Ascending aorta (tissue), 2 donors: ENCODE measurements at regions of chr19 and their contacts with region 1.

Region 1: DNA sequence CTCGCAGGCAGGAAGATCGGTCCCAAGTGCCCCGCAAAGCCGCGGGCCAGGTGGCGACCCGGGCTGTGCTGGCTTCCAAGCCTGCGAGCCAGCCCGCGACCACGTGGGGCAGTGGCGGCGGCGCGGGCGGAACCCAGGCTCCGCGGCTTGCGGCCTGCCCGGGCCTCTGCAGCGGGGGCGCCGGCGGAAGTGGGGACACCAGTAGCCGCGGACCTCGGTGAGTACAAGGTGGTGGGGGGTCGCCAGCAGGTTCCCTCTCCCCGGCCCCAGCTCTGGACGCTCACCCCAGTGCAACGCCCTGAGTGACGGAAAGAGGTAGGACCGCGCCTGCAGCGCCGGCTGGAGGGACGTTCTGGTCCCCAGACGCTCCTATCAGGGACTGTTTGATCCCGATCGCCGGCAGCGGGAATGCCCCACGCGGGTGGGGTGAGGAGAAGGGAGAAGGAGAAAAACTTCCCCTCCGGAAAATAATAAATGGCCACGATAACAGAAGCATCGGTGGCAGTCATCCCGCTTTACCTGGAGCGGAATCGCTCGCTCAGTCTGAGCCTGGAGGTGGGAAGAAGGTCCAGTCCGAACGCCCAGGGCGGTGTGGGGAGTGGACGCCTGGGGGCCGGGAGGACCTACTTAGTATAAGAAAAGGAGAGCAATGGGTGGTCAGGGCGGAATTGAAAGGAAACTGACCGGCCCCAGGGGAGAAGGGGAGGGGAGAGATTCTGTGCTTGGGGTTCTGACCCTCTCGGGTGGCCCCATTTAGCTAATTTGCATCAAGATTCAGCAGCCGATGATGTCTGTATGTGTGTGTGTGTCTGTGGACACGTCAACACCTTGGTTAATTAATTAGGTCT is at the start of gene GEMIN7:
- DNase-seq: peak in 1 of 2 donors; percentile 84
- H3K4me3 ChIP-seq: peak within 1 kb of the TSS; percentile 86 to 91
- H3K27ac ChIP-seq: peak within 1 kb of the TSS in 1 of 2 donors; percentile 15
- H3K4me1 ChIP-seq: peaks cover 7 to 10% of the 10 kb centered on the region in 2 donors
- H3K27me3 ChIP-seq: no peaks in the 10 kb centered on the region
- CTCF ChIP-seq: peak in 1 of 3 experiments; percentile 16
- total RNA-seq, gene GEMIN7: 48.2 TPM

Region 2: GRCh38 chr19:44890366-44891015 is 188.8 kb before region 1 on chr19:
- intact Hi-C with region 1: no loop called
- DNase-seq: peak; percentile 100
- H3K4me3 ChIP-seq: peak overlapping the region; percentile 65 to 72
- H3K27ac ChIP-seq: peak overlapping the region; percentile 92 to 97
- H3K4me1 ChIP-seq: peaks cover 12 to 19% of the 10 kb centered on the region in 2 donors
- H3K27me3 ChIP-seq: no peaks in the 10 kb centered on the region
- CTCF ChIP-seq: no peak

Region 3: GRCh38 chr19:45038931-45039893 is 40.1 kb before region 1 on chr19 and contains the start of gene CLASRP:
- intact Hi-C with region 1: loop called (anchors 2 kb)
- DNase-seq: peak; percentile 65 to 94
- H3K4me3 ChIP-seq: peak within 1 kb of the TSS; percentile 83 to 86
- H3K27ac ChIP-seq: peak within 1 kb of the TSS; percentile 91 to 96
- H3K4me1 ChIP-seq: peaks cover 5 to 22% of the 10 kb centered on the region in 2 donors
- H3K27me3 ChIP-seq: no peaks in the 10 kb centered on the region
- CTCF ChIP-seq: no peak
- total RNA-seq, gene CLASRP: 103 TPM

Region 4: DNA sequence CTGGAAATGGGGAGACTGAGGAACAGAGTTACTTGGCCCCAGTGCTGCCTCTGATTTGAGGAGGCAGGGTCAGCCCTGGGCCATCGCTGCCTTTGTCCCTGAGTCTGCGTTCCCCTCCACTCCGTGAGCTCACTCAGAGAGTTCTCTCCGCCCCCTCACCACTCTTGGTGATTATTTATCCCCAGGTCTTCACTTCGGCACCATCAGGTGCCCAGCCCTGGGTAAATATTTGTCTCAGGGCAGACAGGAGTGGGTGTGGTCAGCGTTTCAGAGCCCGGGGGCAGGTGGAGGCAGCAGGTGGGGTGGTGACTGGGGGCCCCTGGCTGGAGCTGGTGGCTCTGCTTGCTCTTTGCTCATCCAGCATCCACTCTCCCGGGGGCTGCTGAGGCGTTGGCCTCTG is 34.3 kb after region 1 on chr19:
- intact Hi-C with region 1: no loop called
- DNase-seq: no peak
- H3K4me3 ChIP-seq: no peak overlapping the region
- H3K27ac ChIP-seq: no peak overlapping the region
- H3K4me1 ChIP-seq: no peaks in the 10 kb centered on the region
- H3K27me3 ChIP-seq: no peaks in the 10 kb centered on the region
- CTCF ChIP-seq: no peak